ENCODE measurements at regions of chr7 and their contacts with region 1.

Region 1: GRCh38 chr7:41940760-41941343 is 238.0 kb upstream of the INHBA start:
- DNase-seq: peak; percentile 60
- ATAC-seq: peak; percentile 86 to 90
- H3K4me3 ChIP-seq: no peak overlapping the region
- H3K27ac ChIP-seq: no peak overlapping the region
- H3K4me1 ChIP-seq: peaks cover 17% of the 10 kb centered on the region
- H3K27me3 ChIP-seq: no peaks in the 10 kb centered on the region
- CTCF ChIP-seq: peak; percentile 90

Region 2: DNA sequence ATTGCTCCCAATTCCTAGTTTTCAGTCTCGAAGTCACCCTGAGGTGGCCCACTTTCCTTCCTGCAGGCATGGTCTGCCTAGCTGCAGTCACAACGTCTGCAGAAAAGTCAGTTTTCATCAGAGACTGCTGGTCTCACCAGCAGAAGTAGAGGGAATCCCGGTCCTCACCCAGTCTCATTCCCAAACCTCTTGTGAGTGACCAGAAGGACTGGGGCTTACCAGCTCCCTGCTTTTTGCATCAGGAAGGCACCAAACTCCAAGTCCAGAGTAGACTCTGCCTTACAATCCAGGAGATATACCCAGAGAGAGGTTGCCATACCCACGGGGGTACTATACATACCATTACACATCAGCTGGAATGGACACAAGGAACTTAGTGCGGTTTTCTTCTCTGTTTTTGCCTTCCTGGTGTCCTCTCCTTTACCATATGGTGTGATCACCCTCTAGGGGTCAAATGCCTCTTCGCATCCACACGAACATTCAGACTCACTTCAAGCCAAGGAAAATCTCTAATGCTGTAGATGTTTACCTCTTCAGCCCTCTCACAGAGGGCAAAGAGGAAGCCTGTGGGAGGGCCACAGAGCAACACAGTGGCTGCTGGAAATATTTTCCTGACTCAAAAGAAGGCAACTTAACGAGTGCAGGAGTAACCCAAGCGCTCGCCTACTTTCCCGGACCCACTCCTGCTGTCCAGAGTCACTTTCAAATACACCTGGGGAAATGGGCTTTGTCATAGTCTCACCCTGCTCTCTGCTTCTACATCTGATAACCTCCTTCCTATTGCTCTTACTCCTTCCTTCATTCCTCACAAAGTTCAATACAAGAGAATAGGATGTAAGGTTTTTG is 750.2 kb after region 1 on chr7:
- intact Hi-C with region 1: loop called (anchors 10 kb)
- DNase-seq: no peak
- ATAC-seq: peak; percentile 65 to 72
- H3K4me3 ChIP-seq: no peak overlapping the region
- H3K27ac ChIP-seq: no peak overlapping the region
- H3K4me1 ChIP-seq: no peaks in the 10 kb centered on the region
- H3K27me3 ChIP-seq: no peaks in the 10 kb centered on the region
- CTCF ChIP-seq: peak; percentile 47

Region 3: DNA sequence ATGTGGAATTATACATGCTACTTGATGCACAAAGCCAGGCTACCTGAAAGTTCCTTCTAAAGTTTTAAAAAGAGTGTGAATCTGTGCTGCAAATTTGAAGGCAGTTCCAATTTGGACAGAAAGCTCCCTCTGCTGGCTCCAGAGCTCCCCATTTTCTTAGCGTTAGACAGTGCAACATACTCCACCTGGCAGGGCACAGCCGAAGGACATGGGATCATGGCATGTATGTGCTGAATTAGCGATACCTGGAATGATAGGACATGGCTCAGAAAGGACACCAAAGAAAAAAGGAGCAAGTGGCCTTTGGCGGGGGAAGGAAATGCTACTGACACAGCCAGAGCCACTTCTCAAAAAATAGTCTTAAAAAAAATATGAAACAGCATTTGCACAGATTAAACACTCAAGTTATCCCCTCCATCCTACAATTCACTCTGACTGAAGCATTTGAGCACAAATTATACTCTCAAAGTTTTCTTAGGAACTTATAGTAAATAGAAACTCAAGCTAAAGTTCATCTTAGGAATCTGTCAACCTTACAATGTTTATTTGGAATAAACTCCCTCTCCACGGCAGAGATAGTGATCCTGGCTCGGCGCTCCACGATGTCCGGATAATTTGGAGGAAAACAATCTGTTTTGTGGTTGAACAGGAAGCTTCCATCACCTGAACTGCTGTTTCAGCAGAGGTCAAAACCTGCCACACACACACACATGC is 891.0 kb after region 1 on chr7:
- intact Hi-C with region 1: loop called (anchors 10 kb)
- DNase-seq: peak; percentile 49
- ATAC-seq: peak; percentile 73 to 85
- H3K4me3 ChIP-seq: peak overlapping the region; percentile 7
- H3K27ac ChIP-seq: peak overlapping the region; percentile 12
- H3K4me1 ChIP-seq: peaks cover 23% of the 10 kb centered on the region
- H3K27me3 ChIP-seq: no peaks in the 10 kb centered on the region
- CTCF ChIP-seq: peak; percentile 54

Measured in lower lobe of right lung (tissue), 2 donors.